Calu3 (cell line): ENCODE measurements at regions of chr4 and their contacts with region 1.

Region 1: DNA sequence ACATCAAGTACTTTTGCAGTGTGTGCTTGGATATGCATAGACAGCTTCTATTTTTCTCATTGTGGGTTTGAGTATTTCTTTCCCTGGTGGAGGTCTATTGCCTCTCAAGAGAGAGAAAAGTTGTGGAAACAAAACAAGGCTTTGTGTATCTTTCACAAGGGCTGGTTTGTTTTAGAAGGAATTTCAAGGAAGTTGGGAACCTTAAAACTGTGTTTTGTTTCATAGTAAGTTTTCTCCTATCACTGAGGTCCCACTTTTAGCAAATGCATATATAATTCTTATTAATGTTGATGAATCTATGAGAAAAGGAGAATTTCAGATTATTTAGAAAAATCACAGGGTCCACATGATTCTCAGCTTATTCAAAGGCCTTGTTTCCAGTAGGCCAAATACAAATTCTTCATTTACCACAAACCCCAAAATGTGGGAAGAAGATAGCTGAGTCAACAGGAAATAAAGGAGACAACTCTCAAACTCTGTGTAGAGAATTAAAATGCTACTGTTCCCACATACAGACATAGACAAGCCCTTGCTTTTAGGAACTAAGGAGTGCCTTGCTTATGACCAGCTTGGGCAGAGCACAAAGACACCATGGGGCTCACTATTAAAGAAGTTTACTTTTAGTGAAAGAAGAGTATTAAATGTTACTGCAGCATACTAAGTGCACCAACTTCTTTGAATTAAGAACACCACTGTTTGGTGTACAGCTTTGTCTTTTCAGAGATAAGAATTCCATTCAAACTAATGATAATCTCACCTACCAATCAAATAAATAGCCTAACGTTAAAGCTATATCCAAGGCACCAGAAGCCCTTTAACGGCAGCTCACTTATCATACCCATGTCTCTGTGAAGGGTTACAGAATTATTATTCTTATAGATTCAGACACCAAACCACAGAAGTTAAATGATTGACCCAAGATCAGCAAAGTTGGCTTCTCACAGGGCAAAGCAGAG is 177.4 kb upstream of the LEF1 start:
- DNase-seq: no peak
- H3K4me3 Mint-ChIP-seq: no peak overlapping the region
- H3K27ac Mint-ChIP-seq: no peak overlapping the region
- H3K4me1 Mint-ChIP-seq: no peaks in the 10 kb centered on the region
- H3K27me3 Mint-ChIP-seq: no peaks in the 10 kb centered on the region
- CTCF ChIP-seq: no peak

Region 2: DNA sequence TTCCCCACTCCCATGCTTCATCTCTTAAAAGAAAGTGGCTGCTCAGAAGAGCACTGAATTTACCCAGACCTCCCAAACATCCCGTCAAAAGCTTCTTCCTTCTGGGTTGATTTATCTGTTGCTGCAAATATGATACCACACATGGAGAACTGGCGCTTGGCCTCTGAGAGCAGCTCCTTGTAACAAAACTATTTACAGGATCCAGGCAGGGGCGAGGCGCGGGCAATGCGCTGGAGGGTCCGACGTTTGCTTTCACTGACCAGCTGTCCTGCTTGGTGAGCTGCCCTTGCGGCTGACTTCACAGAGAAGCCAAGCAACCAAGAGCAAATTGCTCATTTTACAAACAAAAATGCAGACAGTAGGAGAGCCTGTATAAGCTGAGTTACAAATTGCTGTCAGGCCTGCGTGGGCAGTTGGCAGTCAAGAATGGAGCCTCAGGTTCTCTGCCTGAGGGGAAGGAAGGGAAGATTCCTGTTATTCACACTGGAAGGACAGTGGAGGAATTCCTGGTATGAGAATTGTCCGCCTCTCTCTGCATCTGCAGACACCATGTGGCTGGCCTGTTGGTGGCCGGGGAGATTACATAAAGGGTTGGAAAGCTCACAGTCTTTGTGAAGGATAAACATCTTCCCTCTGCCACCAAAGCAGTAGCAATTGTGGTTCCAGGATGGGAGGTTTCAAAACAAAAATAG is 14.8 kb after region 1 on chr4:
- CTCF ChIA-PET with region 1: no interaction called
- intact Hi-C with region 1: loop called (anchors 1 kb)
- DNase-seq: no peak
- H3K4me3 Mint-ChIP-seq: no peak overlapping the region
- H3K27ac Mint-ChIP-seq: no peak overlapping the region
- H3K4me1 Mint-ChIP-seq: no peaks in the 10 kb centered on the region
- H3K27me3 Mint-ChIP-seq: peaks cover 8% of the 10 kb centered on the region
- CTCF ChIP-seq: no peak